ENCODE measurements at regions of chr20 and their contacts with region 1.

Region 1: GRCh38 chr20:48620519-48621254 is 207.1 kb downstream of the PREX1 start:
- DNase-seq: peak; percentile 84 to 92
- ATAC-seq: peak; percentile 87 to 94
- H3K4me3 ChIP-seq: peak overlapping the region; percentile 42
- H3K27ac ChIP-seq: peak overlapping the region; percentile 80 to 83
- H3K4me1 ChIP-seq: peaks cover 28% of the 10 kb centered on the region
- CTCF ChIP-seq: peak; percentile 73
- EP300 ChIP-seq: no peak
- POLR2A ChIP-seq: no peak
- RAD21 ChIP-seq: peak; percentile 93 to 95

Region 2: DNA sequence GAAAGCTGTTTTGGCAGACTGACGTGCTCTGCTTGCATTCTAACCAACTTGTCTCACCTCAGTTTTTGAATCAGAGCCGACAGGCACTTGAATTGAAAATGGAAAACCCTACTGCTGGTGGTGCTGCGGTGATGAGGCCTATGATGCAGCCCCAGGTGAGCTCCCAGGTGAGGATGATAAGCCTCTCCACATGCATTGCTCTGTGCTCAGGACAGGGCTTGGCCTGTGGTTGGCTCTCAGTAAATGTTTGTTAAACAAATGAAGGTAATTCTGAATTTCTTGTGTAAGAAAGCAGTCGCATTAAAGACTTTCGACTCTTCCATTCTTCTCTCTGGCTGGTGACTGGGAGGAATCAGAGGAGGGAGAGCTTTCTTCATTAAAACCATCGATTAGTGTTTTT is 971.7 kb before region 1 on chr20:
- CTCF ChIA-PET with region 1: interaction called, 11 read pairs
- POLR2A ChIA-PET with region 1: no interaction called
- DNase-seq: no peak
- ATAC-seq: no peak
- H3K4me3 ChIP-seq: no peak overlapping the region
- H3K27ac ChIP-seq: no peak overlapping the region
- H3K4me1 ChIP-seq: no peaks in the 10 kb centered on the region
- CTCF ChIP-seq: no peak
- EP300 ChIP-seq: no peak
- POLR2A ChIP-seq: no peak
- RAD21 ChIP-seq: no peak

Region 3: DNA sequence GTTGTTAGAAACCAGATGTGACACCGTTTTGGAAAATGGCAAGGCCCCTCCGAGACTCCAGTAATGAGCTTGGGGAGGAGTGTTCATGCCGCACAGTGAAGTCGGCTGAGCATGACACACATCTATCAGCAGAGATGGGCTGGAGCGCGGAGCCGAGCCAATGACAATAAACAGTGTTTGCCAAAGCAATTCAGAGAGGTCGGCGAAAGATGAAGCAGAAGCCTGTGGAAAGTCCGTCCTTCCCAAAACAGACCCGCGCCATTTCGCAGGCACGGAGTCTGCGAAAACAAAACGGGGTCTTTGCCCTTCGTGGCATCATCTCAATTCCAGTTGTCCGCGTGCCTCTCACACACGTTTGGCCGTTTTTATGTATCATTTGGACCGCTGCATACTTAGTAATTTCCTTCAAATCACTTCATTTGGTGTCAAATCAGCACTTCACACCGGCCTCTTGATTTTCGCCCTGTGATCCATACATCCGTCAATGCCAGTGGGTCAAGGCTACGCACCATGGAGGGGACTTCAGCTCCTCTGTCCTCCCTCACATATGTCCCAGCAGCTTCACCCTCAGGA is 906.7 kb before region 1 on chr20:
- CTCF ChIA-PET with region 1: interaction called, 12 read pairs
- POLR2A ChIA-PET with region 1: no interaction called
- DNase-seq: no peak
- ATAC-seq: no peak
- H3K4me3 ChIP-seq: no peak overlapping the region
- H3K27ac ChIP-seq: no peak overlapping the region
- H3K4me1 ChIP-seq: peaks cover 7% of the 10 kb centered on the region; the same call in 1 of the 3 replicates
- CTCF ChIP-seq: no peak
- EP300 ChIP-seq: no peak
- POLR2A ChIP-seq: no peak
- RAD21 ChIP-seq: no peak

Region 4: DNA sequence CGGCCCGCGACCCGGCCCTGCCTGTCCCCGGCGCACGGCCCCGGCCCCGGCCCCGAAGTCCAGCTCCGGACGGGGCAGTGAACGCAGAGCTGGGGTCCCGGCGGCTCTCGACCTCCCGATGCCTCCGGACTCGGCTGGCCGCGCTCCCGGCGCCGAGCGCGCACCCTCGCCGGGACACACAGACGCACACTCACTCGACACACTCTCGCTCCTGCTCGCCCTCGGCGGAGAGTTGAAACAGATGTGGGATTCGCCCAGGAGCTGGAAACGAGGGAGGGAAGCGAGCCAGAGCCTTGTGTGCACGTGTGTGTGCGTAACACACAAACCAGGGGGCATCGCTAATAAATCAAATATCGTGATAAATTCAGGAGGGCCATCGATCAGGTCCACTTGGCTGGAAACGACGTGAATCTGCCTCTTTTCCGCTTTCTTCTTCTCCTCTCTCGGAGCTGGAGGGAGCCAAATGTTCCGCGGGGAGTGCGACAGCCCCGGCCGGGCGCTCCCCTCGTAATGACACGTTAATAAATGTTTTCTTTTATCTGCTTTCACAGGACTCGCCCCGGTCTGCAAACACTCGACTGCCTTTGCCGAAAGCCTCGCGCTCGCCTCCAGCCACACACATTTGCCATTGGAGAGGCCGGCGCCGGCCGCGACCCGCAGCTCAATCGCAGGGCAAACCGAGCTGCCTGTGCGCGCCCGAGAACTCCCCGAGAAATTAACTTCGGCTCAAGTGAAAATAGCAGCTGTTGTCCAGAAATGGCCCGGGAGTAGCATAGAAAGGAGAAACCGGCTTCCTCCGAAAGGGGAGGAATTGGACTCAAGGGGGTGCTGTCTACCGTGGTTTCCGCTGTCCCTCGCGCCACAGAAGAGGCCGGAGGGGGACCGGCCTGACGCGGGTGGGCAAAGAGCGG is 834.6 kb before region 1 on chr20:
- CTCF ChIA-PET with region 1: interaction called, 91 read pairs
- POLR2A ChIA-PET with region 1: interaction called, 4 read pairs
- DNase-seq: peak; percentile 80
- ATAC-seq: peak; percentile 74 to 88
- H3K4me3 ChIP-seq: peak overlapping the region; percentile 69
- H3K27ac ChIP-seq: peak overlapping the region; percentile 73 to 90
- H3K4me1 ChIP-seq: 0 out of 3 replicates have a peak, but pooled peaks cover 12% of the 10 kb centered on the region
- CTCF ChIP-seq: peak; percentile 82
- EP300 ChIP-seq: no peak
- POLR2A ChIP-seq: no peak
- RAD21 ChIP-seq: peak; percentile 89 to 95

Region 5: GRCh38 chr20:48012197-48013085 is 608.2 kb before region 1 on chr20:
- CTCF ChIA-PET with region 1: no interaction called
- POLR2A ChIA-PET with region 1: no interaction called
- DNase-seq: peak in 1 of 2 experiments; percentile 21
- ATAC-seq: no peak
- H3K4me3 ChIP-seq: no peak overlapping the region
- H3K27ac ChIP-seq: no peak overlapping the region
- H3K4me1 ChIP-seq: no peaks in the 10 kb centered on the region
- CTCF ChIP-seq: no peak
- EP300 ChIP-seq: no peak
- POLR2A ChIP-seq: no peak
- RAD21 ChIP-seq: no peak

Region 6: GRCh38 chr20:48398506-48399505 is 221.9 kb before region 1 on chr20:
- CTCF ChIA-PET with region 1: interaction called, 12 read pairs
- POLR2A ChIA-PET with region 1: no interaction called
- DNase-seq: peak in 1 of 2 experiments; percentile 6
- ATAC-seq: no peak
- H3K4me3 ChIP-seq: no peak overlapping the region
- H3K27ac ChIP-seq: peak overlapping the region in 1 of 2 experiments; percentile 31; a peak in 1 of 6 replicates
- H3K4me1 ChIP-seq: peaks cover 17% of the 10 kb centered on the region
- CTCF ChIP-seq: no peak
- EP300 ChIP-seq: no peak
- POLR2A ChIP-seq: no peak
- RAD21 ChIP-seq: no peak

Region 7: GRCh38 chr20:48563211-48563870 is 57.3 kb before region 1 on chr20:
- CTCF ChIA-PET with region 1: interaction called, 11 read pairs
- POLR2A ChIA-PET with region 1: no interaction called
- DNase-seq: no peak
- ATAC-seq: no peak
- H3K4me3 ChIP-seq: no peak overlapping the region
- H3K27ac ChIP-seq: no peak overlapping the region
- H3K4me1 ChIP-seq: no peaks in the 10 kb centered on the region
- CTCF ChIP-seq: no peak
- EP300 ChIP-seq: no peak
- POLR2A ChIP-seq: no peak
- RAD21 ChIP-seq: no peak

Region 8: GRCh38 chr20:48657475-48658470 is 37.1 kb after region 1 on chr20:
- CTCF ChIA-PET with region 1: interaction called, 11 read pairs
- POLR2A ChIA-PET with region 1: no interaction called
- DNase-seq: peak; percentile 78 to 92
- ATAC-seq: peak; percentile 83 to 91
- H3K4me3 ChIP-seq: no peak overlapping the region
- H3K27ac ChIP-seq: no peak overlapping the region
- H3K4me1 ChIP-seq: no peaks in the 10 kb centered on the region
- CTCF ChIP-seq: peak; percentile 94
- EP300 ChIP-seq: no peak
- POLR2A ChIP-seq: no peak
- RAD21 ChIP-seq: peak; percentile 96 to 99

Region 9: DNA sequence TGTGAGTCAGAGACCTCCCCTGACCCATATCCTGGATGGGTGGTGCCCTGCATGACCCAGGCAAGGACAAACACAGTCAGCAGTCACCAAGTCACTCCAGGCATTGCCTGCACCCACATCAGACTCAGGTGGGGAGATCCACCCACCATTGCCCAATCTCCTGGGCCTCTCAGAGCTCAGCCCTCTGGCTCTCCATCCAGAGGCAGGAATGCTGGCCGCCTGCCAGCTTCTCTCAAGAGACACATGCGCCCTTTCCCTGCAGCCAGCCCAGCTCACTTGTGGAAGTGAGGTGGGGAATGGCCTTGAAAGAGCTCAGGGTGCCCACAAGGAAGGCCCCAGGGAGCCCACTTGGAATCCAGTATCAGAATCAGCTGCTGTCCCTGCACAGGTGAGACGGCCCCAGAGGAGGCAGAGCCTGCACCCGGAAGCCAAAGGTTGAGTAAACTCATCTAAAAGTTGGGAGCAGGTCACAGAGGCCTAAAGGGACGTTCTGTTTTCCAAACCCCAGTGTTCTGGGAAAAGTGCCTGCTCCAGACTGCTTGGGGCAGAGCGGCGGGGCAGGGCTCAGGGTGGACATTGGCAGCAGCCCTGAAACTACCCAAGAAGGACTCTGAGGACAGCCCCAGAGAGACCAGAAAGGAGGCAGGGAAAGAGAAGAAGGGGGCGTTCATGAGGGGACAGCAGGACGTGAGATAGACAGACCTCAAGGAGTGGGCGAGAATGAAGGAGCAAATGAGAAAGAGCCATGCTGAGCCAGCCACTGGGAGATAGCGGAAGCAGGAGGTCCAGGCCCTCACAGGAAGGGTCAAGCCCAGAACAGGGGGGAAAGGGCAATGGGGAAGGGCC is 77.4 kb after region 1 on chr20:
- CTCF ChIA-PET with region 1: no interaction called
- POLR2A ChIA-PET with region 1: no interaction called
- DNase-seq: peak; percentile 56 to 61
- ATAC-seq: peak; percentile 47 to 80; a peak in 5 of 6 replicates
- H3K4me3 ChIP-seq: no peak overlapping the region
- H3K27ac ChIP-seq: peak overlapping the region; percentile 57 to 70; a peak in 5 of 6 replicates
- H3K4me1 ChIP-seq: peaks cover 16% of the 10 kb centered on the region
- CTCF ChIP-seq: no peak
- EP300 ChIP-seq: no peak
- POLR2A ChIP-seq: no peak
- RAD21 ChIP-seq: no peak

Region 10: GRCh38 chr20:48760403-48760983 is 139.8 kb after region 1 on chr20:
- CTCF ChIA-PET with region 1: no interaction called
- POLR2A ChIA-PET with region 1: no interaction called
- DNase-seq: no peak
- ATAC-seq: peak; percentile 30 to 36; a peak in 3 of 6 replicates
- H3K4me3 ChIP-seq: no peak overlapping the region
- H3K27ac ChIP-seq: peak overlapping the region in 1 of 2 experiments; percentile 66; a peak in 3 of 6 replicates
- H3K4me1 ChIP-seq: peaks cover 10% of the 10 kb centered on the region
- CTCF ChIP-seq: no peak
- EP300 ChIP-seq: no peak
- POLR2A ChIP-seq: no peak
- RAD21 ChIP-seq: no peak

Region 11: GRCh38 chr20:48853591-48854443 is 233.1 kb after region 1 on chr20:
- CTCF ChIA-PET with region 1: no interaction called
- POLR2A ChIA-PET with region 1: no interaction called
- DNase-seq: peak in 1 of 2 experiments; percentile 56
- ATAC-seq: peak; percentile 77 to 82
- H3K4me3 ChIP-seq: no peak overlapping the region
- H3K27ac ChIP-seq: peak overlapping the region; percentile 25 to 43; a peak in 3 of 6 replicates
- H3K4me1 ChIP-seq: peaks cover 24% of the 10 kb centered on the region
- CTCF ChIP-seq: no peak
- EP300 ChIP-seq: no peak
- POLR2A ChIP-seq: no peak
- RAD21 ChIP-seq: no peak